CD8-positive, alpha-beta T cell (primary cell): ENCODE measurements at regions of chr10 and their contacts with region 1.

Region 1: GRCh38 chr10:104824380-104825006 is 183.4 kb downstream of the SORCS3 start:
- DNase-seq: peak in 3 of 9 experiments; percentile 4 to 12 (median 5)
- ATAC-seq: no peak
- H3K4me3 ChIP-seq: no peak overlapping the region
- H3K4me3 Mint-ChIP-seq: no peak overlapping the region
- H3K27ac ChIP-seq: no peak overlapping the region
- H3K27ac Mint-ChIP-seq: no peak overlapping the region
- H3K4me1 ChIP-seq: no peaks in the 10 kb centered on the region
- H3K4me1 Mint-ChIP-seq: no peaks in the 10 kb centered on the region
- H3K27me3 ChIP-seq: no peaks in the 10 kb centered on the region
- H3K27me3 Mint-ChIP-seq: peaks cover 6% of the 10 kb centered on the region
- CTCF ChIP-seq: no peak

Region 2: DNA sequence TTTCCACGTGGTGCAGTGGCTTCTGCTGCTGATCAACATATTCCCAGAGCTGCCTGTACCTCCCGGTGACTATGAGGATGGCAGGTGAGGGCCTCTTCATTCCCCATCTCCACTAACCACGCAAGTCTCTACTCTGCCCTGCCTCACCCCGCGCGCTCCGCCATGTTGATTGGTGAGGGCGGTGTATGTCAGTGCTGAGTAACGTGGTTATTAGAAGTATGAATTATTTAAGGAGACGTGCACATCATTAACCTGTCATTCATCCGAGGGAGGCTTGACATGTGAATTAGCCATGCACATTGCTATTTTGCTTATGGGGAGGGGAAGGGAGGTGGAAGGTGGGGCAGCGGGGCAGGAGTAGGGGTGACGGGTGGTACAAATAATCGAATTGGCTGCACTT is 44.8 kb before region 1 on chr10:
- CTCF ChIA-PET with region 1: no interaction called
- POLR2A ChIA-PET with region 1: no interaction called
- intact Hi-C with region 1: loop called in 1 of 2 experiments (anchors 2 kb)
- DNase-seq: no peak
- ATAC-seq: no peak
- H3K4me3 ChIP-seq: no peak overlapping the region
- H3K4me3 Mint-ChIP-seq: no peak overlapping the region
- H3K27ac ChIP-seq: no peak overlapping the region
- H3K27ac Mint-ChIP-seq: no peak overlapping the region
- H3K4me1 ChIP-seq: no peaks in the 10 kb centered on the region
- H3K4me1 Mint-ChIP-seq: no peaks in the 10 kb centered on the region
- H3K27me3 ChIP-seq: no peaks in the 10 kb centered on the region
- H3K27me3 Mint-ChIP-seq: peaks cover 4% of the 10 kb centered on the region
- CTCF ChIP-seq: no peak

Region 3: DNA sequence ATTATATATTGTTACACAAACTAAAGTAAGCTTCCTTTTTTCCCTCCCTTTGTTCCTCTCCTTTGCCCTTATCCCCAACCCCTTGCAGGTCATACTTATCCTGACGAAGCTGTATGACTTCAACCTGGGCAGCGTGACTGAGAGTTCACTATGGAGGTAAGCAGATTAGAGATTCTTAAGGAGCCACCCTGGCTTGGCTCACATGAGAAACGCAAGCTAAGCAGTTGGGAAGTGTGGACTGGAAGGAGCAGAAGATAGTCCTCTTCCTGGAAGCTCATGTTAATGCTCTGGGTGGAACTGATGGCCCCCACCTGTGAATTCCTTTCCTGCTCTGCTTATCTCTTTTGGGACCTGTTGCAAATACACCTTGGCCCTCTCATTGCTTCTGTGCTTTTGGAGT is 18.2 kb after region 1 on chr10:
- CTCF ChIA-PET with region 1: no interaction called
- POLR2A ChIA-PET with region 1: no interaction called
- intact Hi-C with region 1: loop called in 1 of 2 experiments (anchors 1 kb)
- DNase-seq: no peak
- ATAC-seq: no peak
- H3K4me3 ChIP-seq: no peak overlapping the region
- H3K4me3 Mint-ChIP-seq: no peak overlapping the region
- H3K27ac ChIP-seq: no peak overlapping the region
- H3K27ac Mint-ChIP-seq: no peak overlapping the region
- H3K4me1 ChIP-seq: no peaks in the 10 kb centered on the region
- H3K4me1 Mint-ChIP-seq: no peaks in the 10 kb centered on the region
- H3K27me3 ChIP-seq: no peaks in the 10 kb centered on the region
- H3K27me3 Mint-ChIP-seq: peaks cover 4% of the 10 kb centered on the region
- CTCF ChIP-seq: no peak